WTC11 (cell line): ENCODE measurements at regions of chr22 and their contacts with region 1.

Region 1: DNA sequence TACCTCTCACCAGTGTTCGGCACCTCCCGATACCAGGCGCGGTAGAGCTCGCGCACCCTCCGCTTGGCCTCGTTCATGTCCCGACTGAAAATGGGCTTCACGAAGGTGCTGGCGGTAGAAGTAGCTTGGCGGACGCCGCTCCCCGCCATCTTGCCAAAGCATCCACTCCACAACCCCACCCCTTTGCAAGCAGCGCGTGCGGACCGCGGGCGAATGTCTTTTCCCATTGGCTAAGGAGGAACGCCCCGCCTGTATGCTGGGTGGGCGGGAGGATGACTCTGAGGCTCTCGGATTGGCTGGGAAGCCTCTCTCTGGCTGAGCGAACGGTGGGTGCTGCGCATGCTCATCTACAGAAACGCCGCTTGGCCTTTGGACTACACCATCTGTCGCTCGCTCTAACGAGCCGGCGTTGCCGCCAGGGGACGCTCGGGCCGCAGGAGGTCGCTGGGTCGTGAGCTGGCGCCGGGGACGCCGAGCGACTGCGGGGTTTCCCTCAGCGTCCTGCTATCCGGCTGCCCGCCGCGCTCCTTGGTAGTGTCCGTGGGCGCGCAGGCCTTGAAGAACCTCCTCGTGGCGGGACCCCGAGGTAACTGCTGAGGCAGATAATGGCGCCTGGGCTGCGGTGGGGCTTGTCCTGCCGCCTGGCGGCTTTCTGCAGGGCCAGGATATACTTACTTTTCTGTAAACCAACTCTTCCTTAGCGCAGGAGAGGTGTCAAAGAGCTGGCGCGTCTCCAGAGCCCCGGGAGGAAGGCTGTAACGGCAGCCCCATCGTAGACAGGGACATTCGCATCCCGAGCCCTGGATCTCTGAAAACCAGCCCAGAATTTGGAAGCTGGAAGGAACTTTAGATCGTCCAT is at the start of gene NDUFA6:
- DNase-seq: peak; percentile 98
- ATAC-seq: peak; percentile 97
- H3K4me3 Mint-ChIP-seq: peak within 1 kb of the TSS; percentile 97
- H3K27ac Mint-ChIP-seq: peak within 1 kb of the TSS; percentile 99
- H3K4me1 Mint-ChIP-seq: peaks cover 12% of the 10 kb centered on the region; the same call in 1 of the 2 replicates
- H3K27me3 Mint-ChIP-seq: peaks cover under 1% of the 10 kb centered on the region; the same call in 1 of the 2 replicates
- CTCF ChIP-seq: peak; percentile 58; the same call in 1 of the 2 replicates
- total RNA-seq, gene NDUFA6: 84.6 to 90.8 TPM (median 85.9 TPM) in 3 replicates

Region 2: DNA sequence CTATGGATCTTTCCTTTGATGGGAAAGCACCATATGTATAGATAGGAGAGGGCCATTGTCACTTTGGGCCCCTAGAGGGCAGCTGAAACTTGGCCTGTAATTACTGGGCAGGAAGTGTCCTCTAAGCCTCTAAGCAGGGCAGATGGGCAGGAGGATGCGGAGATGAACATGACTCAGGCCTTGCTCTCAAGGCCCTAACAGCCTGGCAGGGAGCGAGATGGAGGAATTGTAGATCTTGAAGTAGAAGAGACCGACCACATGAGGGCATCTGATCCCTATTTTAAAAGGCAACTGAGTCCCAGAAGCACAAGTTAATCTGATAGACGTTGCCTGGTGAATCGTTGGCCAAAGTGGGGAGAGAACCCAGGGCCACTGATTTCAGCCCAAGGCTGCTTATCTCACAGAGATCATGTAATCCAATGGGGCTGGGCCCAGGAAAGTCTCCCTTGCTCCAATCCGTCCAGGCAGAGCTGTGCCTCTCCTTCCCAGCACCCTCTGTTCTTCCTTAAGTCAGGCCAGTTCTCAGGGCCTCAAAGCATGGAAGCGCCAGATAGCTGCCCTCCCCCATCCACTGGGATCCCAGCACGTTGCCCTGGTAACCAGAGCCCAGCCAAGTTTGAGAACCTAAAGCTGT is 124.1 kb before region 1 on chr22:
- CTCF ChIA-PET with region 1: interaction called, 25 read pairs
- POLR2A ChIA-PET with region 1: interaction called, 4 read pairs
- DNase-seq: peak; percentile 40
- ATAC-seq: peak; percentile 80
- H3K4me3 Mint-ChIP-seq: no peak overlapping the region
- H3K27ac Mint-ChIP-seq: 0 out of 2 replicates have a peak overlapping the region, but pooled peaks have one; percentile 9
- H3K4me1 Mint-ChIP-seq: peaks cover 18% of the 10 kb centered on the region
- H3K27me3 Mint-ChIP-seq: peaks cover 29% of the 10 kb centered on the region
- CTCF ChIP-seq: no peak

Region 3: GRCh38 chr22:42022162-42022835 is 68.5 kb before region 1 on chr22:
- CTCF ChIA-PET with region 1: no interaction called
- POLR2A ChIA-PET with region 1: no interaction called
- DNase-seq: no peak
- ATAC-seq: no peak
- H3K4me3 Mint-ChIP-seq: no peak overlapping the region
- H3K27ac Mint-ChIP-seq: no peak overlapping the region
- H3K4me1 Mint-ChIP-seq: peaks cover 3% of the 10 kb centered on the region; the same call in 1 of the 2 replicates
- H3K27me3 Mint-ChIP-seq: peaks cover 24% of the 10 kb centered on the region
- CTCF ChIP-seq: no peak

Region 4: DNA sequence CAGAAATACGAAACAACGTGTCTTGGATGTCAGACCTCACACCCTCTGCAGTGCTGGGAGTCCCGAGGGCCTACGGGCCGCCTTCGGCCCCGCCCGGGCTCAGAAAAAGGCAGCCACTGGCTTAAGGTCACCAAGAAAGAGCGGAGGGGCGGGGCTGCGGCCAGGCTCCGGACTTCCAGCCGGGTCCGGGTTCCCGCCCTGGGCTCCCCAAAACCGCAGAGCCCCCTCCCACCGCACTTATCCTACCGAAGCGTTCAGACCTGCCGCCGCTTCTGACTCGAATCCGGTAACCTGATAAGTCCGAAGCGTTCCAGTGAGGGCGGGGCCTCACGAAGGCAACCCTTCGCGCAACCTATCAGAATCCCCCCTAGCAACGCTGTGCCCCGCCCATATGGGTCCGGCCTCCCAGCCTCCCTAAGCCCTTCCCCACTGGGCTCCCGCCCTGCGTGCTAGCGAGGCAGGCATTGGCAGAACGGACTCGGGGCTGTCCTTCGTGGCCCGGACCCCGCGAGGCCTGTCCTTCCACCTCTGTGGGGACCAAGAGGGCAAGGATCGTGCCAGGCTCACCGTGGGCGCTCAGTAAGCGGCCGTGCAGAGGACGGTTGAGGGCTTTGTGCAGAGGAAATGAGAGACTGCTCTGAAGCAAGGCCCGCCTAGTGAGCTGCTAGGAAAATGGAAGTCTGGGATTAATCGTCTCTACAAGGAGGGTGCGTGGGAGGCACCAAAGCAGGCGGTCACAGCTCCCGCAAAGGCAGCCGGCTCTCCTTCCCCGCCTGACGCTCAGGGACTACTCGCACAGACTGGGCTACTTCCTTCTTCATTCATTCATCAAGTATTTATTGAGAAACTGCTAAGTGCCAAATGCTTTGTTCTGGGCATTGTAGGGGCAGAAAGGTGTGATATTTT is 20.1 kb before region 1 on chr22 and contains the start of gene NAGA:
- CTCF ChIA-PET with region 1: interaction called, 22 read pairs
- POLR2A ChIA-PET with region 1: interaction called, 10 read pairs
- DNase-seq: peak; percentile 97
- ATAC-seq: peak; percentile 95
- H3K4me3 Mint-ChIP-seq: peak within 1 kb of the TSS; percentile 72
- H3K27ac Mint-ChIP-seq: peak within 1 kb of the TSS; percentile 8; the same call in 1 of the 2 replicates
- H3K4me1 Mint-ChIP-seq: peaks cover 45% of the 10 kb centered on the region
- H3K27me3 Mint-ChIP-seq: peaks cover 28% of the 10 kb centered on the region
- CTCF ChIP-seq: no peak
- total RNA-seq, gene NAGA: 19.4 to 22.8 TPM (median 22.3 TPM) in 3 replicates

Region 5: DNA sequence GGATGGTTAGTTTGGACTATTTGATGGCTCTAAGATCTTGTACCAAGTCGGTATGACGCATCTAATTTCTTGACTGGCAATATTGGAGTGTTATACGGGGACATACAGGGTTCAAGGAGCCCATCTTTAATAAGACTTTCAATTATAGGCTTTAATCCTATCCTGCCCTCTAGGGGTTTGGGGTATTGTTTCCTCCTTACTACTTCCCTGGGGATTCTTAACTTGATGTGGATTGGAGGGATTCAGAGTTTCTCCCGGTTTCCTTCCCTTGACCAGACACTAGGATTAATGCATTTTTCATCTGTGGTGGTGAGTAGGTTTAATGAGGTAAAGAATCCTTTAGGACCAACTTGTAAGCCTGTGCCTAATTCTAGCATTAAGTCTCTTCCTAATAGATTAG is 21.0 kb after region 1 on chr22:
- CTCF ChIA-PET with region 1: interaction called, 87 read pairs
- POLR2A ChIA-PET with region 1: interaction called, 5 read pairs
- DNase-seq: no peak
- ATAC-seq: peak; percentile 49; the same call in 1 of the 2 replicates
- H3K4me3 Mint-ChIP-seq: no peak overlapping the region
- H3K27ac Mint-ChIP-seq: no peak overlapping the region; the same call in 1 of the 2 replicates
- H3K4me1 Mint-ChIP-seq: peaks cover 7% of the 10 kb centered on the region
- H3K27me3 Mint-ChIP-seq: peaks cover 33% of the 10 kb centered on the region
- CTCF ChIP-seq: no peak

Region 6: DNA sequence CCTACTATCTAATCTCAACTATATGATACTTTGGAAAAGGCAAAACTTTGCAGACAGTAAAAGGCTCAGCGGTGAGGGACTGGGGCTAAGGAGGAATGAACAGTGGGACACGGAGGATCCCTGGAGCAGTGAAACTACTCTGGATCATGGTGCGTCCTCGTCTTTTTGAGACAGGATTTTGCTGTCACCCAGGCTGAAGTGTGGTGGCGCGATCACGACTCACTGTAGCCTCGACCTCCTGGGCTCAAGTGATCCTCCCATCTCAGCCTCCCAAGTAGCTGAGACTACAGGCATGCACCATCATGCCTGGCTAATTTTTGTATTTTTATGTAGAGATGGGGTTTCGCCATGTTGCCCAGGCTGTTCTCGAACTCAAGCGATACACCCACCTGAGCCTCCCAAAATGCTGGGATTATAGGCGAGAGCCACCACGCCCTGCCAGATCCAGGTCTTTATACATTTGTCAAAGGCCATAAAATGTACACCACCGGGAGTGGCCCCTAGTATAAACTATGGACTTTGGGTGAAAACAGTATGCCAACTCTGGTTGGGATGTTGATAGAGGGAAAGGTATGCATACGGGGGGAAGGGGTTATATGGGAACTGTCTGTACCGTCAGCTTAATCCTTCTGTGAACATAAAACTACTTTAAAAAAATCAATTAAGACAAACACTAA is 67.8 kb after region 1 on chr22:
- CTCF ChIA-PET with region 1: no interaction called
- POLR2A ChIA-PET with region 1: no interaction called
- DNase-seq: no peak
- ATAC-seq: no peak
- H3K4me3 Mint-ChIP-seq: no peak overlapping the region
- H3K27ac Mint-ChIP-seq: no peak overlapping the region
- H3K4me1 Mint-ChIP-seq: no peaks in the 10 kb centered on the region
- H3K27me3 Mint-ChIP-seq: no peaks in the 10 kb centered on the region
- CTCF ChIP-seq: no peak